ENCODE measurements at regions of chrX and their contacts with region 1.

Region 1: DNA sequence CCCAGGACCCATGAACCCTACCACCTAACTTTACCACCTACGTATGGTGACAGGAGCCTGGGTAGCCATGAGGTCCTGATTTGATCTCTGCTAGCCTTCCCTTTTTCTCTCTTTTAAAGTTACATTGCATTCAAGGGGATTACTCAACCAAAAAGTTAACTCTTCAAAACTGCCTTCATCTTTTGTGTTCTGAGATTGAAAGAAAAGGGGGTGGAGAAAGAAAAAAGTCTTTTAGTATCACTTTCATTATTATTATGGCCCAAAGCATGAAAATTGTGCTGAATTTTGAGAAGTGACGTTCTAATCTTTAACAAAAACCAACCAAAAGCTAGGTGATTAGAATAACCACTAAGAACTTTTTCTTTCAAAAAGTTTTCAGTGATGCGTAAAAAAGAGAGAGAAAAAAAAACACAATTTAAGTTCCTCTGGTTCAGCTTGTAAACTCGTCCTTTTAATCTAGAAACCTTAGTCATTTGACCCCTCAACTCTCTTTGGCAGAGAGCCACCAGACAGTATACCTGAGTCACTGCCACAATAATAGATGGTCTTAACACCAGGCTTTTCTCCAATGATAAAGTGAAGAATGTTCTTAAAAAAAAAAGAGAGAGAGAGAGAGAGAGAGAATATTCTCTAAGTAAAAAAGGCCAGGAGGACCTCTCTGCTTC is 347.4 kb upstream of the FGF13 start:
- DNase-seq: no peak
- H3K4me3 ChIP-seq: no peak overlapping the region
- H3K27ac ChIP-seq: no peak overlapping the region
- H3K4me1 ChIP-seq: no peaks in the 10 kb centered on the region
- H3K27me3 ChIP-seq: no peaks in the 10 kb centered on the region
- CTCF ChIP-seq: no peak
- EP300 ChIP-seq: no peak
- POLR2A ChIP-seq: no peak

Region 2: DNA sequence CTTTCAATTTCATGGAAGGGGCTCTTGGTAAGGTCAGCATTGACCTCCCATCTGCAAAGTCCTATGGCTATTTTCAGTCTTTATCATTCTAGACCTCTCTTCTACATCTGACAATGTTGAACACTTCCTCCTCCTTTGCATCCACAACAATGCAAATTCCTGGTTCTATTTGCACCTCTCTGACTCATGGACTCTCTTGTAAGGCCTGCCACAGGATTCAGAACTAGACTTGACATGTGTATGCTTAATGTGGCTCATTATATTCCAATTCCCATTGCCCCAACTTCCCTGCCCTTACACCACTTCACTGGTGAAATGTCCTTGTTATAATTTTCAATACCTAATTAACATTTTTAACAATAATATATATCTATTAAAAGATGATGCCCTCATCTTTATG is 33.1 kb before region 1 on chrX:
- in situ Hi-C with region 1: no loop called
- intact Hi-C with region 1: loop called (anchors 1 kb)
- DNase-seq: no peak
- H3K4me3 ChIP-seq: no peak overlapping the region
- H3K27ac ChIP-seq: no peak overlapping the region
- H3K4me1 ChIP-seq: no peaks in the 10 kb centered on the region
- H3K27me3 ChIP-seq: no peaks in the 10 kb centered on the region
- CTCF ChIP-seq: no peak
- EP300 ChIP-seq: no peak
- POLR2A ChIP-seq: no peak

Measured in transverse colon (tissue), 4 donors.